Heart right ventricle (tissue), 16 donors: ENCODE measurements at regions of chr5 and their contacts with region 1.

Region 1: GRCh38 chr5:146049014-146049703 is 56.2 kb downstream of the PLAC8L1 start:
- DNase-seq: peak in 1 of 2 donors; percentile 56
- ATAC-seq: peak; percentile 46 to 75 (median 66)
- H3K4me3 ChIP-seq: no peak overlapping the region
- H3K27ac ChIP-seq: peak overlapping the region in 2 of 10 donors; percentile 17 to 46
- H3K4me1 ChIP-seq: peaks cover 0 to 12% (median 0%) of the 10 kb centered on the region in 9 donors
- H3K27me3 ChIP-seq: no peaks in the 10 kb centered on the region
- CTCF ChIP-seq: peak; percentile 41 to 81 (median 70)

Region 2: GRCh38 chr5:145681686-145682085 is 367.5 kb before region 1 on chr5:
- intact Hi-C with region 1: loop called in 6 of 10 experiments (anchors 2 to 10 kb)
- DNase-seq: peak in 1 of 2 donors; percentile 46
- ATAC-seq: peak; percentile 57 to 90 (median 84)
- H3K4me3 ChIP-seq: no peak overlapping the region
- H3K27ac ChIP-seq: no peak overlapping the region
- H3K4me1 ChIP-seq: peaks cover 0 to 9% (median 4%) of the 10 kb centered on the region in 9 donors
- H3K27me3 ChIP-seq: no peaks in the 10 kb centered on the region
- CTCF ChIP-seq: peak; percentile 45 to 80 (median 69)

Region 3: DNA sequence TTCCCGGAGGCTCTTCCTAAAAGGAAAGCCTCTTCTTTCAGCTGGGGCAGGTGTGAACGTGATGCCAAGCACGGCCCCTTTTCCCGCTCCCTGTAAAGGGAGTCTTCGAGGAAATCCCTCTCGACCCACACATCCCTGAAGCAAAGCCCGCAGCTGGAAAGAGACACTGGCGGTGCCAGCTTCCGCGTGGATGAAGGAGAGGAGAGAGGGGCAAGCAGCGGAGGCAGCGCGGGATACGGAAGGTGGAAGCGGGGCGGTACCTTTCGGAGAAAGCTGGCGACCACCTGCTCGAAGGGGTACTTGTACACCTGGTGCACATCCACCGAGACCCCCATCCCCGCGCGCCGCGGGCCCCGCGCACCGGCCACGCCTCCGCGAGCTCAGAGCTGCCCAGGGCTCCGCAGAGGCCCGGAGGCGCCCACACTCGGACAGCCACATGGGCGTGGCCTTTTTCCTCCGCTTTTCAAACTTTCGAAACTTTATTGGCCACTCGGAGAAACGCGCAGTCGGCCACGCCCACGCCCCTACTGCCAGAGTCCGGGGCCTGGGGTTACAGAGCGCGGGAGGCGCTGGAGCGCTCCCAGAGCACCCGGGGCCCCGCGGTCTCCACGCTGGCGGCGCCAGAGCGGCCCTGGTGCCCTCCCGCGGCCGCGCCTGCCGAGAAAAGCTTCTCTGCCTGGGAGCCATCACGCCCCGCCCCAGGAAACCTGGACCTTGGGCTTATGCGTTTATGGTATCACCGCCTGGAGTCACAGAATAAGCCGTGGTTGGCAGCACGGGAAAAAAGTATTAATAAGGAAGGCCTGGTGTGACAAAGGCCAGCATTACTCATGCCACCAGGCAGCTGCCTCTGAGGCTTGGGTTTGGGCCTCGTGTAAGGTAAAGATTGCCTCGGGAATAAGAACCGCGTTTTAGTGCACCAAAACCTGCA is 214.0 kb before region 1 on chr5 and contains the start of gene PRELID2:
- intact Hi-C with region 1: loop called in 7 of 10 experiments (anchors 5 to 10 kb)
- DNase-seq: peak; percentile 85 to 91
- ATAC-seq: peak; percentile 91 to 97 (median 95)
- H3K4me3 ChIP-seq: peak within 1 kb of the TSS; percentile 49 to 95 (median 72)
- H3K27ac ChIP-seq: peak within 1 kb of the TSS in 9 of 10 donors; percentile 2 to 81 (median 72)
- H3K4me1 ChIP-seq: peaks cover 3 to 36% (median 17%) of the 10 kb centered on the region in 9 donors
- H3K27me3 ChIP-seq: no peaks in the 10 kb centered on the region
- CTCF ChIP-seq: peak in 4 of 9 donors; percentile 24 to 38 (median 34)
- total RNA-seq, gene PRELID2: 6.8 to 83.7 (median 13.7) TPM

Region 4: GRCh38 chr5:145936401-145937131 is 112.6 kb before region 1 on chr5 and contains the start of gene SH3RF2:
- intact Hi-C with region 1: loop called in 1 of 10 experiments (anchors 10 kb)
- DNase-seq: peak; percentile 24 to 40
- ATAC-seq: peak; percentile 59 to 89 (median 87)
- H3K4me3 ChIP-seq: peak within 1 kb of the TSS; percentile 10 to 61 (median 52)
- H3K27ac ChIP-seq: peak within 1 kb of the TSS in 8 of 10 donors; percentile 12 to 63 (median 22)
- H3K4me1 ChIP-seq: peaks cover 0 to 41% (median 25%) of the 10 kb centered on the region in 9 donors
- H3K27me3 ChIP-seq: peaks cover 0 to 44% (median 0%) of the 10 kb centered on the region in 7 donors
- CTCF ChIP-seq: no peak
- total RNA-seq, gene SH3RF2: 163 to 456 (median 219) TPM

Region 5: GRCh38 chr5:145975361-145976066 is 73.6 kb before region 1 on chr5:
- intact Hi-C with region 1: loop called in 1 of 10 experiments (anchors 10 kb)
- DNase-seq: no peak
- ATAC-seq: peak in 1 of 8 donors; percentile 22
- H3K4me3 ChIP-seq: no peak overlapping the region
- H3K27ac ChIP-seq: peak overlapping the region in 3 of 10 donors; percentile 16 to 49 (median 25)
- H3K4me1 ChIP-seq: peaks cover 9 to 47% (median 25%) of the 10 kb centered on the region in 9 donors
- H3K27me3 ChIP-seq: no peaks in the 10 kb centered on the region
- CTCF ChIP-seq: no peak